HCT116 (cell line): ENCODE measurements at regions of chr6 and their contacts with region 1.

Region 1: GRCh38 chr6:85642774-85643536 is at the start of gene SYNCRIP:
- DNase-seq: peak; percentile 94
- ATAC-seq: peak; percentile 81
- H3K4me3 ChIP-seq: peak within 1 kb of the TSS; percentile 98 to 99
- H3K27ac ChIP-seq: peak within 1 kb of the TSS; percentile 99
- H3K4me1 ChIP-seq: peaks cover 9 to 35% of the 10 kb centered on the region in 2 experiments; a peak in 3 of 4 replicates
- H3K27me3 ChIP-seq: no peaks in the 10 kb centered on the region
- CTCF ChIP-seq: no peak
- POLR2A ChIP-seq: peak; percentile 87
- RAD21 ChIP-seq: no peak
- total RNA-seq, gene SYNCRIP: 189 TPM

Region 2: DNA sequence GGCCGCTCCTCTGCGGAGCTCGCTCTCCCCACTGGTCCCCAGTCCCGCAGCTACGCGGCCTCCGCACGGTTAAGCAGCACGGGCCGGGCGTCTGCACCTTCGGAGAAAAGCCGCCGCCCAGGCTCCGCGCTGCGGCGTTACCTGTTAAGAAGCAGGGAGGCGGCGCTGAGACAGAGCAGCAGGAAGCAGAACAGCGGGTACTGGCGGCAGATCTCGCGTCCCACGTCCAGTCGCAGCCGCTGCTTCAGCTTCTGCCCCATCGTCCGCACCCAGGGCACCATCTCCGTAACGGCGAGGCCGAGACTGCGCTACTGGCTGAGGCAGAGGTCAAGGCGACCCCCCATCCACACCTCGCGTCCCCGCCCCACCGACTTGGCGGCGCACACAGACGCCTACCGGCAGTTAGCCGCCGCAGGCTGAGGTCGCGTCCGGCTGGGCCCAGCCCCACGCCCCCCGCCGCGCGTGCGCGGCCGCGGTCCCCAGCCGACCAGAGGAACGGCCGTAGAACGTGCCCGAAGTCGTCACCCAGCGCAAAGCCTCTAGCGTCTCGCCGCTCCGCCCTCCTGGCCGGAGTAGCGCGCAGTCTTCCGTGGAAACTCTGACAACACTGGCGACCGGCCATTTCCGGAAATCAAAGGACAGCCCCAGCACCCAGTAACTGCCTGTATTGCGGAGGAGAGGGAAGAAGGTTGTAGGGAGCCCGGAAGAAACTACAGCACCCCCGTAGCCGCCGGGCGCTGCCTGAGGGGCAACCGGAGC is 49.3 kb before region 1 on chr6 and contains the start of gene SNX14:
- CTCF ChIA-PET with region 1: no interaction called
- POLR2A ChIA-PET with region 1: interaction called, 10 read pairs
- RAD21 ChIA-PET with region 1: interaction called in 1 of 2 experiments, 5 read pairs
- intact Hi-C with region 1: no loop called
- DNase-seq: peak; percentile 92
- ATAC-seq: peak; percentile 93
- H3K4me3 ChIP-seq: peak within 1 kb of the TSS; percentile 75 to 88
- H3K27ac ChIP-seq: peak within 1 kb of the TSS; percentile 90
- H3K4me1 ChIP-seq: peaks cover 4 to 17% of the 10 kb centered on the region in 2 experiments; a peak in 3 of 4 replicates
- H3K27me3 ChIP-seq: no peaks in the 10 kb centered on the region
- CTCF ChIP-seq: no peak
- POLR2A ChIP-seq: peak; percentile 68
- RAD21 ChIP-seq: no peak
- total RNA-seq, gene SNX14: 84.8 TPM

Region 3: DNA sequence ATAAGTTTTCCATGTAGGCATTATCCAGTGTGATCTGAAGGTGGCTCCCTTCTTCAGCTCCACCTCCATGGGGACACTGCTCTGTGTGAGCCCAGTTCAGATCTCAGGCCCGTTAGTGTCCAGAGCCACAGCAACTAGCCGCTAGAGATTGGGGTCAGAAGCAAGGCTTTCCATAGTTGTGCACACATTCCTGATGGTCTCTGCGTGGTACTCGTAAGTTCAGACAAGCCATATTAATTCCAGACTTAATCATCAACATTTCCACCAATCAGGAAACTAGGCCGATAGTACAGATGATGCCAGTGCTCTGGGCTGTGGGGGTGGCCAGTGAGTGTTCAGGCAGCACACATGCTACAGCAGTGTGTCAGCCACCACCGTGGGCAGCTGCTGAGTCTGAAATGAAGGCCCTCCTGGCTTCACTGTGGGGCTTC is 17.2 kb after region 1 on chr6:
- CTCF ChIA-PET with region 1: interaction called, 10 read pairs
- POLR2A ChIA-PET with region 1: interaction called, 15 read pairs
- RAD21 ChIA-PET with region 1: no interaction called
- intact Hi-C with region 1: no loop called
- DNase-seq: peak; percentile 72
- ATAC-seq: peak; percentile 98
- H3K4me3 ChIP-seq: peak overlapping the region; percentile 16 to 41; a peak in 3 of 4 replicates
- H3K27ac ChIP-seq: peak overlapping the region; percentile 27
- H3K4me1 ChIP-seq: peaks cover 6 to 13% of the 10 kb centered on the region in 2 experiments; a peak in 3 of 4 replicates
- H3K27me3 ChIP-seq: no peaks in the 10 kb centered on the region
- CTCF ChIP-seq: peak in 2 of 3 experiments; percentile 31 to 43; a peak in 3 of 6 replicates
- POLR2A ChIP-seq: no peak
- RAD21 ChIP-seq: peak; percentile 48

Region 4: GRCh38 chr6:85669735-85670194 is 26.8 kb after region 1 on chr6:
- CTCF ChIA-PET with region 1: no interaction called
- POLR2A ChIA-PET with region 1: interaction called, 192 read pairs
- RAD21 ChIA-PET with region 1: interaction called in 1 of 2 experiments, 4 read pairs
- intact Hi-C with region 1: no loop called
- DNase-seq: no peak
- ATAC-seq: peak; percentile 11; the same call in 1 of the 2 replicates
- H3K4me3 ChIP-seq: no peak overlapping the region
- H3K27ac ChIP-seq: peak overlapping the region; percentile 43; the same call in 1 of the 2 replicates
- H3K4me1 ChIP-seq: peaks cover 4 to 40% of the 10 kb centered on the region in 2 experiments; a peak in 3 of 4 replicates
- H3K27me3 ChIP-seq: no peaks in the 10 kb centered on the region
- CTCF ChIP-seq: no peak
- POLR2A ChIP-seq: no peak
- RAD21 ChIP-seq: no peak

Region 5: GRCh38 chr6:86657192-86657591 is 1014.2 kb after region 1 on chr6:
- CTCF ChIA-PET with region 1: no interaction called
- POLR2A ChIA-PET with region 1: no interaction called
- RAD21 ChIA-PET with region 1: no interaction called
- intact Hi-C with region 1: no loop called
- DNase-seq: no peak
- ATAC-seq: no peak
- H3K4me3 ChIP-seq: no peak overlapping the region
- H3K27ac ChIP-seq: no peak overlapping the region
- H3K4me1 ChIP-seq: no peaks in the 10 kb centered on the region
- H3K27me3 ChIP-seq: no peaks in the 10 kb centered on the region
- CTCF ChIP-seq: no peak
- POLR2A ChIP-seq: no peak
- RAD21 ChIP-seq: no peak